Activated CD4-positive, alpha-beta memory T cell treated with anti-CD3 and anti-CD28 coated beads, Interleukin-2, amount 10 ng/mL, durations not matched to agents 7 days and 5 days (primary cell): ENCODE measurements at regions of chr2 and their contacts with region 1.

Region 1: DNA sequence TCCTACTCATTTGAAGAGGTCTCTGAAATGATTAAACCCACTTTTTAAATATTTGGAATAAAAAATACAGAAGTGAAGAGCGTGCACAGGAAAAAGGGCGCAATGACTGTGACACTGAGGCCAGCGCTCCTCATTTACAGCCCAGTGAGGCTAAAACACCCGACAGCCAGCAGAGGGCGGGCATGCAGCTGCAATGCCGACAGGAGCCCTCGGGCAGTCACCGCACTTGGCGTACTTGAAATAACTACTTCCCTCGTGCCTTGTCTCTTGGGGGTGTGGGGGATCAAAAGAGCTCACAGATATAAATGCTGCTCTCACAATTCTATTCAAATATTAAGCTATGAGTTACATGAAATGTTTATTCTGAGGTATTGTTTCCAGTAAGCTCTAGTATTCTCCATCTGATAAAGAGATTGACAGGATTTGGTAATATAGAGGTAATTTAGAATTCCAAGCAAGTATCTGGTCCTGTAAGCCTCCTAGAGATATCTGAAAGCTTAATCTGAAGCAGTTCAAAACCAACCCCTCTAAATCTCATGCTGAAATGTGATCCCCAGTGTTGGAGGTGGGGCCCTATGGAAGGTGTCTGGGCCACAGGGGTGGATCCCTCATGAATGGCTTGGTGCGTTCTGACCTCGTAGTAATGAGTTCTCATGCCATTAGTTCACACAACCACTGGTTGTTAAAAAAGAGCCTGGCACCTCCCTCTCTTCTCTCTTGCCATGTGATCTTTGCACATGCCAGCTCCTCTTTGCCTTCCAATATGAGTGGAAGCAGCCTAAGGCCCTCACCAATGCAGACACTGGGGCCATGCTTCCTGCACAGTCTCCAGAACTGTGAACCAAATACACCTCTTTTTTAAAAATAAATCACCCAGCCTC is 93.6 kb downstream of the ZAP70 start:
- DNase-seq: peak; percentile 83
- H3K4me3 Mint-ChIP-seq: no peak overlapping the region
- H3K27ac Mint-ChIP-seq: no peak overlapping the region
- H3K4me1 Mint-ChIP-seq: peaks cover 3% of the 10 kb centered on the region
- H3K27me3 Mint-ChIP-seq: no peaks in the 10 kb centered on the region

Region 2: GRCh38 chr2:98188351-98189049 is 381.5 kb after region 1 on chr2:
- CTCF ChIA-PET with region 1: interaction called, 12 read pairs
- POLR2A ChIA-PET with region 1: no interaction called
- DNase-seq: no peak
- H3K4me3 Mint-ChIP-seq: no peak overlapping the region
- H3K27ac Mint-ChIP-seq: no peak overlapping the region
- H3K4me1 Mint-ChIP-seq: no peaks in the 10 kb centered on the region
- H3K27me3 Mint-ChIP-seq: peaks cover 4% of the 10 kb centered on the region

Region 3: GRCh38 chr2:98269274-98269673 is 462.3 kb after region 1 on chr2:
- CTCF ChIA-PET with region 1: interaction called, 21 read pairs
- POLR2A ChIA-PET with region 1: no interaction called
- DNase-seq: no peak
- H3K4me3 Mint-ChIP-seq: no peak overlapping the region
- H3K27ac Mint-ChIP-seq: no peak overlapping the region
- H3K4me1 Mint-ChIP-seq: no peaks in the 10 kb centered on the region
- H3K27me3 Mint-ChIP-seq: peaks cover 22% of the 10 kb centered on the region

Region 4: GRCh38 chr2:98385050-98385699 is 578.2 kb after region 1 on chr2:
- CTCF ChIA-PET with region 1: interaction called, 23 read pairs
- POLR2A ChIA-PET with region 1: no interaction called
- DNase-seq: peak; percentile 80
- H3K4me3 Mint-ChIP-seq: no peak overlapping the region
- H3K27ac Mint-ChIP-seq: no peak overlapping the region
- H3K4me1 Mint-ChIP-seq: peaks cover 2% of the 10 kb centered on the region
- H3K27me3 Mint-ChIP-seq: peaks cover 17% of the 10 kb centered on the region